WTC11 (cell line): ENCODE measurements at regions of chr16 and their contacts with region 1.

Region 1: GRCh38 chr16:88561485-88562369 is 8.5 kb upstream of the ZC3H18 start:
- DNase-seq: peak; percentile 61
- ATAC-seq: peak; percentile 30
- H3K4me3 Mint-ChIP-seq: peak overlapping the region; percentile 33
- H3K27ac Mint-ChIP-seq: no peak overlapping the region
- H3K4me1 Mint-ChIP-seq: peaks cover 3% of the 10 kb centered on the region; the same call in 1 of the 2 replicates
- H3K27me3 Mint-ChIP-seq: peaks cover 17% of the 10 kb centered on the region
- CTCF ChIP-seq: peak; percentile 45

Region 2: GRCh38 chr16:88487920-88488851 is 73.5 kb before region 1 on chr16:
- CTCF ChIA-PET with region 1: interaction called, 13 read pairs
- POLR2A ChIA-PET with region 1: no interaction called
- DNase-seq: no peak
- ATAC-seq: no peak
- H3K4me3 Mint-ChIP-seq: no peak overlapping the region
- H3K27ac Mint-ChIP-seq: peak overlapping the region; percentile 65; the same call in 1 of the 2 replicates
- H3K4me1 Mint-ChIP-seq: peaks cover 3% of the 10 kb centered on the region; the same call in 1 of the 2 replicates
- H3K27me3 Mint-ChIP-seq: no peaks in the 10 kb centered on the region
- CTCF ChIP-seq: no peak

Region 3: DNA sequence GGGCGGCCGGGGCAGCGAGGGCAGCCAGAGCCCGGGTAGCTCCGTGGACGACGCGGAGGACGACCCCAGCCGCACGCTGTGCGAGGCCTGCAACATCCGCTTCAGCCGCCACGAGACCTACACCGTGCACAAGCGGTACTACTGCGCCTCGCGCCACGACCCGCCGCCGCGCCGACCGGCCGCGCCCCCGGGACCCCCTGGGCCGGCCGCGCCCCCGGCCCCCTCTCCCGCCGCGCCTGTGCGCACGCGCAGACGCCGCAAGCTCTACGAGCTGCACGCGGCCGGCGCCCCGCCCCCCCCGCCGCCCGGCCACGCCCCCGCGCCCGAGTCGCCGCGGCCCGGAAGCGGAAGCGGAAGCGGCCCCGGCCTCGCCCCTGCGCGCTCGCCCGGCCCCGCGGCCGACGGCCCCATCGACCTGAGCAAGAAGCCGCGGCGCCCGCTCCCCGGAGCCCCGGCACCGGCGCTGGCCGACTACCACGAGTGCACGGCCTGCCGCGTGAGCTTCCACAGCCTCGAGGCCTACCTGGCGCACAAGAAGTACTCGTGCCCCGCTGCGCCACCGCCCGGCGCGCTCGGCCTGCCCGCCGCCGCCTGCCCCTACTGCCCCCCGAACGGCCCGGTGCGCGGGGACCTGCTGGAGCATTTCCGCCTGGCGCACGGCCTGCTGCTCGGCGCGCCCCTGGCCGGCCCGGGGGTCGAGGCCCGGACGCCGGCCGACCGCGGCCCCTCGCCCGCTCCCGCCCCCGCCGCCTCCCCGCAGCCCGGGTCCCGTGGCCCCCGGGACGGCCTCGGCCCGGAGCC is 27.6 kb before region 1 on chr16:
- CTCF ChIA-PET with region 1: interaction called, 69 read pairs
- POLR2A ChIA-PET with region 1: interaction called, 3 read pairs
- DNase-seq: peak; percentile 74
- ATAC-seq: peak; percentile 36
- H3K4me3 Mint-ChIP-seq: no peak overlapping the region
- H3K27ac Mint-ChIP-seq: no peak overlapping the region
- H3K4me1 Mint-ChIP-seq: peaks cover 12% of the 10 kb centered on the region; the same call in 1 of the 2 replicates
- H3K27me3 Mint-ChIP-seq: peaks cover 5% of the 10 kb centered on the region; the same call in 1 of the 2 replicates
- CTCF ChIP-seq: no peak

Region 4: DNA sequence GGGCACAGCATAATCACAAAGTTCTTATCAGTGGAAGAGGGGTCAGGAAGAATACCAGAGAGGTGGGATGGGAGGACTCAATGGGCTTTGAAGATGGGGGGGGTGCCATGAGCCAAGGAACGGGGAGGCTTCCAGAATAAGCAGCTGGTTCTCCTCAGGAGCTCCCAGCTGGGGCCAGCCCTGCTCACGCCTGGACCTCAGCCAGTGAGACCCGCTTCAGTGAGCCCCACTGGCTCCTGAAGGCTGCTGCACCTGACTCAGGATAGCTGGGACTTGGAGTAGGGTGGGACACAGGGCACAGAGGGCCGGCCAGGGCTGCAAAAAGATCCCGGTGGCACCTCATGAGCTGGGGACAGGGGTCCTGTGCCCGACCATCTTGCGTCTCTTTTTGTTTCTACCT is 15.9 kb before region 1 on chr16:
- CTCF ChIA-PET with region 1: interaction called, 69 read pairs
- POLR2A ChIA-PET with region 1: no interaction called
- DNase-seq: no peak
- ATAC-seq: no peak
- H3K4me3 Mint-ChIP-seq: no peak overlapping the region
- H3K27ac Mint-ChIP-seq: no peak overlapping the region
- H3K4me1 Mint-ChIP-seq: peaks cover 3% of the 10 kb centered on the region; the same call in 1 of the 2 replicates
- H3K27me3 Mint-ChIP-seq: peaks cover 75% of the 10 kb centered on the region
- CTCF ChIP-seq: no peak